ENCODE measurements at regions of chr20 and their contacts with region 1.

Region 1: DNA sequence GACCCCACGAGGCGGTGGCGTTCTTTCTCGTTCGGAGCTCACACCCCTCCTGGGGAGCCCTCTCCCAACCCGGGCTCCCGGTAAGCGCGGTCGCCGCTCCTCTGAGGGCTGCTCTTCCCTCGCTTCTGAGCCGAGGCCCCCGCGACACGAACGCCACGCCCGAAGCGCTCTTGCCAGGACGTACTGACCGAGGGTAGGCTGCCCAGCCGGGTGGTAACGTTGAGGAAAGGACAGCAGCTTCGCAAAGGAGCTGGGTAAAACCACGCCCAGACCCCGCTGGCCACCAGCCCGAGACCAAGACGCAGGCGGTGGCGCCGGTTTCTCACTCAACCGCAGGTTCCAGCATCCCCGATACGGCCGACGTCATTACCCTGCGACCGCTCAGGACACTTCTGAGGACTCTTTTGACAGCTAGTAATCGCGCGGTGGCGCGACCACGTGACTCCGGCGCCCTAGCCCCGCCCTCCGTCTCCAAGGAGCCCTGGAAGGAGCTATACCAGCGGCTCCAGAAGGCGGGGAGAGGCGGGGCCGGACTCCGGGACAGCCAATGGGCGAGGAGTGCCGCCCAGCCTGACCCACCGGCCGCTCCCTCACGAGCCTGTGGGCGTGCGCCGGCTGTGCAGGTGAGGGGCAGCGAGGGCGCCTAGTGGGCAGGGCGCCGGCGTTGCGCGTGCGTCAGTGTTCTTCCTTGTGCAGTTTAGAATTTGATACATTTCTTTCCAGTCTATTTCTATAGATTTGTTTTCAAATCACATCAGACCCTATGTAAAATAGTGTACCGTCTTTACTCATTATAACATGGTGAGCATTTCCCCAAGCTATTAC is 4.0 kb upstream of the GZF1 start:
- DNase-seq: peak; percentile 100
- ATAC-seq: peak; percentile 79
- H3K4me3 ChIP-seq: peak overlapping the region; percentile 84
- H3K27ac ChIP-seq: peak overlapping the region; percentile 86
- H3K4me1 ChIP-seq: peaks cover 27% of the 10 kb centered on the region
- H3K27me3 ChIP-seq: no peaks in the 10 kb centered on the region
- CTCF ChIP-seq: no peak

Region 2: DNA sequence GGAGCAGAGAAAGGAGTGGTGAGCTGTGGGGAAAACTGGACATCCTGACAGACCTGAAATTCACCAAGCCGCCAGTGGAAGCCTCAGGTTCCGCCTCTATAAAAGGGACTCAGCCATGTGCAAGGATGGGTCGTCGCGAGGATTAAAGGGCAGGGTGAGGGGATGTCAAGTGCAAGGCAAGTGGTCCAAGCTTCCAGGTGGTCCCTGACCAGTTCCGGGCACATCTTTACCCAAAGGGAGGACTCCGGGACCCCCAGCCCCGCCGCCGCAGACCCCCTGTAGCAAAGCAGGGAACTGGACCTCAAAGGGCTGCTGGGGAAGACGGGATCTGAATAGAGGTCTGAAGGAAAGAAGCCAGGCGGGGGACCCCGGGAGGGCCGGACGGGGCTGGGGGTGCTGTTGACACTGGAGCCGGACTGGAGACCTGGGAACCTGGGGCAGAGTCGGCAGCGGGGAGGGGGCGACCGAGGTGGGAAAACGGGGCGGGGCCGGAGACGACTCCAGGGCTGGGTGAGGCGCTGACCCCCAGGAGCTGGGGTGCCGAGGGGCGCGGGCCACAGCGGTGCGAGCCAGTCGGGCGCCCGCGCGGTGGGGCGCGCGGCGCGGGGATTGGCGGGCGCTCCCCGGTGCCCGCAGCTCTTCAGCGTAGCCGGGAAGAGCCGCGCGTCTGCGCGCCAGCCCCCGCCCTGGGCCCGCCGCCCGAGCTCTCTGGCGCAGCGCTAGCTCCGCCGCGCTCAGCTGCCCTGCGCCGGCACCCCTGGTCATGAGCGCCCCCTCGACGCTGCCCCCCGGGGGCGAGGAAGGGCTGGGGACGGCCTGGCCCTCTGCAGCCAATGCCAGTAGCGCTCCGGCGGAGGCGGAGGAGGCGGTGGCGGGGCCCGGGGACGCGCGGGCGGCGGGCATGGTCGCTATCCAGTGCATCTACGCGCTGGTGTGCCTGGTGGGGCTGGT is 323.0 kb before region 1 on chr20 and contains the start of gene SSTR4:
- CTCF ChIA-PET with region 1: no interaction called
- POLR2A ChIA-PET with region 1: no interaction called
- intact Hi-C with region 1: no loop called
- DNase-seq: no peak
- ATAC-seq: no peak
- H3K4me3 ChIP-seq: no peak within 1 kb of the TSS
- H3K27ac ChIP-seq: no peak within 1 kb of the TSS
- H3K4me1 ChIP-seq: no peaks in the 10 kb centered on the region
- H3K27me3 ChIP-seq: peaks cover 15% of the 10 kb centered on the region
- CTCF ChIP-seq: no peak
- total RNA-seq, gene SSTR4: not detected in 2 replicates

Region 3: GRCh38 chr20:23214903-23215302 is 143.1 kb before region 1 on chr20:
- CTCF ChIA-PET with region 1: no interaction called
- POLR2A ChIA-PET with region 1: no interaction called
- intact Hi-C with region 1: no loop called
- DNase-seq: no peak
- ATAC-seq: no peak
- H3K4me3 ChIP-seq: no peak overlapping the region
- H3K27ac ChIP-seq: no peak overlapping the region
- H3K4me1 ChIP-seq: no peaks in the 10 kb centered on the region
- H3K27me3 ChIP-seq: peaks cover 3% of the 10 kb centered on the region; the same call in 1 of the 2 replicates
- CTCF ChIP-seq: no peak

Region 4: GRCh38 chr20:23629017-23629541 is 271.1 kb after region 1 on chr20:
- CTCF ChIA-PET with region 1: no interaction called
- POLR2A ChIA-PET with region 1: no interaction called
- intact Hi-C with region 1: loop called (anchors 5 kb)
- DNase-seq: peak; percentile 94
- ATAC-seq: peak; percentile 99
- H3K4me3 ChIP-seq: no peak overlapping the region
- H3K27ac ChIP-seq: peak overlapping the region; percentile 45
- H3K4me1 ChIP-seq: peaks cover 28% of the 10 kb centered on the region
- H3K27me3 ChIP-seq: no peaks in the 10 kb centered on the region
- CTCF ChIP-seq: no peak

Measured in PC-3 (cell line).